Activated CD4-positive, alpha-beta T cell treated with anti-CD3 and anti-CD28 coated beads, Interleukin-2, amount 10 ng/mL, durations not matched to agents 24 days and 14 days (primary cell): ENCODE measurements at regions of chr11 and their contacts with region 1.

Region 1: DNA sequence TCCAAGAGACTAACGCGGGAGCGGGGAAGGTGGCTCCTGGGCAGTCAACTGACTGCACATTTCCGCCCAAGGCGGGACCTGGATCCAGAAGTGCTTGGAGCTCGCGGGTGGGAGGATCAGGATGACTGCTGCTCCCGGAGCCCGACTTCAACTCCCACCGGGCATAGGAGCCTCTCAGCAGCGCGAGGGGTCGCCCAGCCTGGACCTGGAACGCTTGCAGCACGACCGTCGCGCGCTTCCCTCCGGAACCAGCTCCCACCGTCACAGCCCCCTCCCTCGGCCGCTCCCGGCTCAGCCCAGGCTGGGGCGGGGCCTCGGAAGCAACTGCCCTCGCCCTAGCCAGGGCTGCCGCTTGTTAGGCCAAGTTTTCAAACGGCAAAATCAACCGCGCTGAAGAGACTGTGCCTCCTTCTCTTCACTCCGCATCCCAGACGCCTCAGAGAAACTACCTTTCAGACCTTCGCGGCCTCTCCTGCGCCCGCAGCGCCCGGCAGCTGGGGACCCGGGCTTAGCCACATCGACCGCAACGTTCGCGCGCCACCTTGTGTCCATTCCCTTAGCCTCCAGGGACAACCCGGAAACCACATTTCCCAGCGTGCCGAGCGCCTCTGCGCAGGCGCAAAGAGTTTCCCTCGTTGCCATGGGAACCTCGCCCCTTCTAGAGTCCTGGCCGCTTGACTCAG is 14.0 kb downstream of the SSH3 start:
- DNase-seq: peak; percentile 100
- H3K4me3 Mint-ChIP-seq: peak overlapping the region; percentile 98
- H3K27ac Mint-ChIP-seq: peak overlapping the region; percentile 99
- H3K4me1 Mint-ChIP-seq: peaks cover 30% of the 10 kb centered on the region
- H3K27me3 Mint-ChIP-seq: peaks cover 6% of the 10 kb centered on the region

Region 2: GRCh38 chr11:67239783-67240575 is 77.4 kb before region 1 on chr11:
- intact Hi-C with region 1: loop called (anchors 1 kb)
- DNase-seq: peak; percentile 98
- H3K4me3 Mint-ChIP-seq: peak overlapping the region; percentile 100
- H3K27ac Mint-ChIP-seq: peak overlapping the region; percentile 98
- H3K4me1 Mint-ChIP-seq: peaks cover 43% of the 10 kb centered on the region
- H3K27me3 Mint-ChIP-seq: no peaks in the 10 kb centered on the region

Region 3: DNA sequence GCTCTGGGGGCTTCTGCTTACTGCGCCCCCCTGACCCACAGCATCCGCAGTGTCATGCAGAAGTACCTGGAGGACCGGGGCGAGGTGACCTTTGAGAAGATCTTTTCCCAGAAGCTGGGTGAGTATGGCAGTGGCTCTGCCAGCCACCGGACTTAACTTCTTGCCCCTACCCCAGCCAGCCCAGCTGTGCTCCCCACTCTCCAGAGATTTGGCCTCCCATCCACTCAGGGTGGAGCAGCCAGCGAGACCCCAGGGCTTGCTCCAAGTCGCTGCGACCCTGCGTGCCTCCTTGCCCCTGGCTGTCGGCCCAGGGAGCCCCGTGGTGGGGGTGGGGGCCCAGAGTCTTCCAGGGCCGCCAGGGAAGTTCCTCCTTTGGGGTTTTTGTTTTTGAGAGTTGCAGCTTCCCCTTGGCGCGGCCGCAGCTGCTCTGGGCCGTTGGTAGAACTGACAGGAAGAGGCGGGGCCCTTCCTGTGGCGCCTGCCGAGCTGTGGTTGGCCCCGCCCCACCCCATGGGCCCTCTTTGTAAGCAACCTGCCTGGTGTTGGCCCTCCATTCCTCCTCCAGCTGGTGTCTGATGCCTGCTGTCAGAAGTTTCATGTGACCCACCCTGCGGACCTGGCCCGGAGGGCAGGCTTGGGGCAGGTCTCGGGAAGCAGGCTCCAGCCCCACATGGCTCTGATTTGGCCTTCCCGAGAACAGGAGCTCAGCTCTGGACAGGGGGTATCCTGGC is 40.0 kb before region 1 on chr11:
- intact Hi-C with region 1: loop called (anchors 1 kb)
- DNase-seq: peak; percentile 97
- H3K4me3 Mint-ChIP-seq: peak overlapping the region; percentile 81
- H3K27ac Mint-ChIP-seq: peak overlapping the region; percentile 99
- H3K4me1 Mint-ChIP-seq: peaks cover 52% of the 10 kb centered on the region
- H3K27me3 Mint-ChIP-seq: no peaks in the 10 kb centered on the region

Region 4: DNA sequence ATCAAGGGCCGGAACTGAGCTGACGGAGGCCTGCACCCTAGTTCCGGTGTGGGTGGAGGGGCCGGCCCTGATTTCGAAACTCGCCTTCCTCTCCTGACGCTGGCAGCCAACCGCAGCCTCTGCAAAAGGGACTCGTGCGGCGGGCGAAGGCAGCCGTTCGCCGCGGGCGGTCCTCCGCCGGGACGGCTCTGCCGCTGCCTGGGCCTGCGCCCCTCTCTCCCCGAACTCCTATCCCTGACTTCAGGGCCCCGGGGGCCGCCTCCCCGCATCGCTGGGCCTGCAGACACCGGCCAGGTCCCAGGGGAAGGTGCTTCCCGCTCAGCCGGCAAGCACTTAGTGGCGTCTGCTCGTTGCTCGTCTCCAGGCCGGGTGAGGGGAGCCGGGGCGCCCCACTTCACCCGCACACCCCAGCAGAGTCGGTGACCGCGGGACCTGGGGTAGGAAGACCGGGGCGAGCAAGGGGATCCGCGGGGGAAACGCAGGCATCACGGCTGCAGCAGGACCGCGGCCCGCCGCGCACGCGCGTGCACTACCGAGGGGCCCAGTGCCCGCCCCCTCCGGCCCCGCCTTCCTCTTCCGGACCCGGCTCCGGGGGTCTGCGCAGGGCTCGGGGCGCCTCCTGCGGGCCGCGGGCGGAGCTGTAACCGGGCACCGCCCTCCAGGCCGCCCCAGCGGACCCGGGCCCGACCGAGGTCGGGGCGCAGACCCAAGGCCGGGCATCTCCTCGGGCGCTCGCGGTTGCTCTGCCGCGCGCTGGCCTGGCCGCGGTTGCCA is 28.7 kb before region 1 on chr11:
- intact Hi-C with region 1: loop called (anchors 1 kb)
- DNase-seq: peak; percentile 97
- H3K4me3 Mint-ChIP-seq: peak overlapping the region; percentile 85
- H3K27ac Mint-ChIP-seq: peak overlapping the region; percentile 98
- H3K4me1 Mint-ChIP-seq: peaks cover 48% of the 10 kb centered on the region
- H3K27me3 Mint-ChIP-seq: no peaks in the 10 kb centered on the region